Left ventricle myocardium superior (tissue), 1 donor: ENCODE measurements at regions of chr1 and their contacts with region 1.

Region 1: DNA sequence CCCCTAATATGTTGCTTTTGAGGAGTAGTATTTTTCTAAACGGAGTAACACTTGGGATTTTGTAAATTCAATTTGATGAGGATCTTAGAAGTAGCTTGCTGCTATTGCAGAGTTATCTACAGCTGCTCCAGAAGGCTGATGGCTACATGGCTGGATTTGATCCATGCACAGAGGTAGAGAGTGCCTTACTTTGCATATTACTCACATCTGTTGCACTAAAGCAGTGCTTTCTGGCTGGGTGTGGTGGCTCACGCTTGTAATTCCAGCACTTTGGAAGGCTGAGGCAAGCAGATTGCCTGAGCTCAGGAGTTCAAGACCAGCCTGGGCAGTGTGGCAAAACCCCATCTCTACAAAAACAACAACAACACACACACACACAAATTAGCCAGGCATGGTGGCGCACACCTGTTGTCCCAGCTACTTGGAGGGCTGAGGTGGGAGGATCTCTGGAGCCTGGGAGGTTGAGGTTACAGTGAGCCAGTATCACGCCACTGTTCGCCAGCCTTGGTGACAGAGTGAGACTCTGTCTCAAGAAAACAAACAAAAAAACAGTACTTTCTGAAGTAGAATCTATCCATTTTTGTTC is 24.6 kb downstream of the RALGPS2 start:
- DNase-seq: no peak
- ATAC-seq: no peak

Region 2: GRCh38 chr1:178612261-178612660 is 137.4 kb before region 1 on chr1:
- intact Hi-C with region 1: loop called (anchors 5 kb)
- DNase-seq: no peak
- ATAC-seq: no peak

Region 3: DNA sequence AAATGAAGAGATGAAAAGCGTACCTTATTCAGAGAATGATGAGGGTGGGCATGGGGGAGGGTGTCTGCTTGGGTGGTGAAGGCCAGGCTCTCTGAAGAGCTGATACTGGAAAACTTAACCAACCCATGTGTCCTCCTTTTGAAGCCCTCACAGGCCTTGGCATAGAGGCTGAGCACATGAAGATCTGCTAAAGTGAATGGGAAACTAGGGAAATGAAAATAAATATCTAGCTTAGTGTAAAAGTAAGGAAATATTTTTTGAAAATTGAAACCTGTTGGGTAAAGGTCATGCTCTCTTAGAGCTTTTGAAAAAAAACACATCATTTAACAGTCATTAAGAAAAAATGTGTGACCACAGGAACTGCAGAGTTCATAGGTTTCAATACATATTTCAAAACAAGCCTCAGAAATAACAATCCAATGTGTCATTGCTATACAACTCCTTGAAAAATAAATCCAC is 65.1 kb before region 1 on chr1:
- intact Hi-C with region 1: no loop called
- DNase-seq: no peak
- ATAC-seq: no peak